Motor neuron (in vitro differentiated cells): ENCODE measurements at regions of chr10 and their contacts with region 1.

Region 1: DNA sequence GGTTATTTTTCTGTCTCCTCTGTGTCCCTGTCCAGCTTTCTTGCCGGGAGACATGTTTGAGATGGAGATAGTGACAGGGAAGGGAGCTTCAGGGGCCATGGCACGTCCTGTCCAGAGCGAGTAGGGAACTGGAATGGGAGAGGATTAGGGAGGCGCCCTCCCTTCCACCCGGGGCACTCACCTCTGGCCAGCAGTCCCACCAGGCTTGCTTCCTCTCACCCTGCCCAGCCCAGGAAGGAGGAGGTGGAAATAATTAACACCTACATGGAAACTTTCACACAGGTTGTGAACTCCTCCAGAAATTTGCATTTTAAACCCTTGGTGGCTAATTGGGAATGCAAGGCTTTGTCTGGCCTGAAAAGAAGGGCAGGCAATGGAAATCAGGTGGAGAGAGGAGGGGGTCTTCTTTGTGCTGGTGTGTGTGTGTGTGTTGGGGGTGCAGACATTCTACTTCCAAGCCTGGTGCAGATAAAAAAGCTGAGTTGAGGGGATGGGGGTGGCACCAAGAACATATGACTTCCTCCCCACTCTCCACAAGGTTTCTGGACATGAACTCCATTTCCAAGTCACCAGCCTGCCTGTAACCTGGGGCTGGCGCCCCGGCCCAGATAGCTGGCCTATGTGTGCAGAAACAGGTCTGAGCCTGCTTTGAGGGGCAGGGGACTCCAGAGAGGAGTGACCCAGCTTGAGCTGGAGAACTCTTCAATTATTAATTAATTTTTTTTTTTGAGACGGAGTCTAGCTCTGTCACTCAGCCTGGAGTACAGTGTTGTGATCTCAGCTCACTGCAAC is 199.4 kb downstream of the CYP26A1 start:
- ATAC-seq: no peak
- H3K4me3 ChIP-seq: no peak overlapping the region
- H3K27ac ChIP-seq: no peak overlapping the region
- H3K4me1 ChIP-seq: peaks cover 0 to 4% of the 10 kb centered on the region in 2 donors

Region 2: GRCh38 chr10:93126484-93127052 is 146.5 kb before region 1 on chr10:
- in situ Hi-C with region 1: loop called in 1 of 9 experiments (anchors 10 kb)
- ATAC-seq: no peak
- H3K4me3 ChIP-seq: no peak overlapping the region
- H3K27ac ChIP-seq: no peak overlapping the region
- H3K4me1 ChIP-seq: no peaks in the 10 kb centered on the region

Region 3: GRCh38 chr10:93149761-93150160 is 123.3 kb before region 1 on chr10:
- in situ Hi-C with region 1: no loop called
- ATAC-seq: no peak
- H3K4me3 ChIP-seq: no peak overlapping the region
- H3K27ac ChIP-seq: no peak overlapping the region
- H3K4me1 ChIP-seq: no peaks in the 10 kb centered on the region